SK-N-SH (cell line): ENCODE measurements at regions of chr3 and their contacts with region 1.

Region 1: GRCh38 chr3:159828542-159828943 is 160.1 kb upstream of the IL12A start:
- DNase-seq: peak; percentile 74
- H3K4me3 ChIP-seq: peak overlapping the region in 1 of 2 experiments; percentile 23; a peak in 1 of 4 replicates
- H3K27ac ChIP-seq: peak overlapping the region; percentile 4 to 96; a peak in 3 of 4 replicates
- H3K4me1 ChIP-seq: peaks cover 20 to 39% of the 10 kb centered on the region in 2 experiments
- H3K27me3 ChIP-seq: no peaks in the 10 kb centered on the region
- CTCF ChIP-seq: peak; percentile 73
- EP300 ChIP-seq: peak in 1 of 2 experiments; percentile 81; a peak in 2 of 4 replicates
- RAD21 ChIP-seq: peak; percentile 89

Region 2: GRCh38 chr3:159839561-159840379 is 11.2 kb after region 1 on chr3:
- CTCF ChIA-PET with region 1: interaction called, 49 read pairs
- POLR2A ChIA-PET with region 1: interaction called, 27 read pairs
- DNase-seq: peak; percentile 81
- H3K4me3 ChIP-seq: peak within 1 kb of the TSS; percentile 65 to 67
- H3K27ac ChIP-seq: peak within 1 kb of the TSS; percentile 47 to 99; a peak in 3 of 4 replicates
- H3K4me1 ChIP-seq: peaks cover 21 to 31% of the 10 kb centered on the region in 2 experiments; a peak in 3 of 4 replicates
- H3K27me3 ChIP-seq: no peaks in the 10 kb centered on the region
- CTCF ChIP-seq: no peak
- EP300 ChIP-seq: peak in 1 of 2 experiments; percentile 45; a peak in 1 of 4 replicates
- RAD21 ChIP-seq: peak; percentile 39

Region 3: GRCh38 chr3:159861369-159861987 is 32.9 kb after region 1 on chr3:
- CTCF ChIA-PET with region 1: interaction called, 160 read pairs
- POLR2A ChIA-PET with region 1: interaction called, 8 read pairs
- DNase-seq: no peak
- H3K4me3 ChIP-seq: no peak overlapping the region
- H3K27ac ChIP-seq: peak overlapping the region in 1 of 2 experiments; percentile 87; a peak in 2 of 4 replicates
- H3K4me1 ChIP-seq: peaks cover 20 to 76% of the 10 kb centered on the region in 2 experiments
- H3K27me3 ChIP-seq: no peaks in the 10 kb centered on the region
- CTCF ChIP-seq: no peak
- EP300 ChIP-seq: no peak
- RAD21 ChIP-seq: no peak

Region 4: DNA sequence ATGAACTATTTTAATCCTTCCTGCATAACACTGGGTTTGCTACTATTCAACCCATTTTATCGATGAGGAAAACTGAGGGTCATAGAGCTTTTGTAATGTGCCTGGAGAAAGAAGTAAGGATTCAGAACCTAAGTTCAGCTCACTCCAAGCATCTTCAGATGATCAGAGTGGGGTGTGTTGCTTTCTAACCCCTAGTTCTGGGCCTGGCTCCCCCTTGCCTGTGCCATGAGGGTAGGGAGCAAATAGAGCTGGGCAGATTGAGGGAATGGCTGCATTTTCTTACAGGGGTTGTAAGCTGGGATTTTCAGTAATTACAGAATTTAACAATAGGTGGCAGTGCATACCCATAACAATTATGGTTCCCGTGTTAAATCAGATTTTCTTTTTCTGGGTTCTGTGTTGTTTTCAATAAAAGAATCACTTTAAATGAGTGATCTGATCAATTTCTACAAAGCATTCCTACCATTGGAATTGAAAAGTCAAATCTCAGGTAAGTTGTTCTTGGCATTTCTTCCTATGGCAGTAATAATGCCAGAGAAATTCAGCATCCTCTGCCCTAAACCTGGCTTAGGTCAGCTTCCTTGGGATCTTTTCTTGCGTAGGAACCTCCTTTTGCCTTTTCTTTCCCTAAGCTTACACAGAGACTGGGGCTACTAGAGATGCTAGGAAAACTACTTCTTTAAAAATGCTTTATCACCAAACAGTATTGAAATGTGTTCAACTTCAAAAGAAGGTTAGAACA is 56.3 kb after region 1 on chr3:
- CTCF ChIA-PET with region 1: interaction called, 189 read pairs
- POLR2A ChIA-PET with region 1: interaction called, 16 read pairs
- DNase-seq: peak; percentile 52
- H3K4me3 ChIP-seq: no peak overlapping the region
- H3K27ac ChIP-seq: peak overlapping the region in 1 of 2 experiments; percentile 97; a peak in 2 of 4 replicates
- H3K4me1 ChIP-seq: peaks cover 32 to 51% of the 10 kb centered on the region in 2 experiments
- H3K27me3 ChIP-seq: no peaks in the 10 kb centered on the region
- CTCF ChIP-seq: peak; percentile 73
- EP300 ChIP-seq: no peak
- RAD21 ChIP-seq: peak; percentile 73

Region 5: GRCh38 chr3:159950156-159950898 is 121.8 kb after region 1 on chr3:
- CTCF ChIA-PET with region 1: no interaction called
- POLR2A ChIA-PET with region 1: no interaction called
- DNase-seq: no peak
- H3K4me3 ChIP-seq: no peak overlapping the region
- H3K27ac ChIP-seq: no peak overlapping the region
- H3K4me1 ChIP-seq: peaks cover 0 to 5% of the 10 kb centered on the region in 2 experiments; a peak in 1 of 4 replicates
- H3K27me3 ChIP-seq: no peaks in the 10 kb centered on the region
- CTCF ChIP-seq: no peak
- EP300 ChIP-seq: no peak
- RAD21 ChIP-seq: no peak

Region 6: DNA sequence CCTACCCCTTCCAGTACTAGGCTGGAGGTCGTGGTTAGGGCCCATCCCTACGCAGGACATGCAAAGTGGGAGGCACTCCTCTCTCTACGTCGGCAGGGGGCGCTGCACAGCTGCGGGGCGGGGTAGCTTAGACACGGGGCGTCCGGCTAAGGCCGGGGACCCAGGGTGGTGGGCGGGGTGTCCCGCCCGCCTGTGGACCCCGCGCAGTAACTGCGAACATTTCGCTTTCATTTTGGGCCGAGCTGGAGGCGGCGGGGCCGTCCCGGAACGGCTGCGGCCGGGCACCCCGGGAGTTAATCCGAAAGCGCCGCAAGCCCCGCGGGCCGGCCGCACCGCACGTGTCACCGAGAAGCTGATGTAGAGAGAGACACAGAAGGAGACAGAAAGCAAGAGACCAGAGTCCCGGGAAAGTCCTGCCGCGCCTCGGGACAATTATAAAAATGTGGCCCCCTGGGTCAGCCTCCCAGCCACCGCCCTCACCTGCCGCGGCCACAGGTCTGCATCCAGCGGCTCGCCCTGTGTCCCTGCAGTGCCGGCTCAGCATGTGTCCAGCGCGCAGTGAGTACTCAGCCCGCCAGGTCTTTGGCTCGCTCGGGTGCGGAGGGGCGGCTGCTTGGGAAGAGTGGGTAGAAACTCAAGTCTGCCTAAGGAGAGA is 160.2 kb after region 1 on chr3 and contains the start of gene IL12A:
- CTCF ChIA-PET with region 1: interaction called, 19 read pairs
- POLR2A ChIA-PET with region 1: no interaction called
- DNase-seq: peak; percentile 92
- H3K4me3 ChIP-seq: peak within 1 kb of the TSS; percentile 71 to 87
- H3K27ac ChIP-seq: no peak within 1 kb of the TSS
- H3K4me1 ChIP-seq: peaks cover 0 to 5% of the 10 kb centered on the region in 2 experiments; a peak in 1 of 4 replicates
- H3K27me3 ChIP-seq: no peaks in the 10 kb centered on the region
- CTCF ChIP-seq: peak; percentile 97
- EP300 ChIP-seq: no peak
- RAD21 ChIP-seq: peak; percentile 50
- polyA plus RNA-seq, gene IL12A: 0.97 and 1.9 TPM in 2 replicates